WTC11 (cell line): ENCODE measurements at regions of chr1 and their contacts with region 1.

Region 1: DNA sequence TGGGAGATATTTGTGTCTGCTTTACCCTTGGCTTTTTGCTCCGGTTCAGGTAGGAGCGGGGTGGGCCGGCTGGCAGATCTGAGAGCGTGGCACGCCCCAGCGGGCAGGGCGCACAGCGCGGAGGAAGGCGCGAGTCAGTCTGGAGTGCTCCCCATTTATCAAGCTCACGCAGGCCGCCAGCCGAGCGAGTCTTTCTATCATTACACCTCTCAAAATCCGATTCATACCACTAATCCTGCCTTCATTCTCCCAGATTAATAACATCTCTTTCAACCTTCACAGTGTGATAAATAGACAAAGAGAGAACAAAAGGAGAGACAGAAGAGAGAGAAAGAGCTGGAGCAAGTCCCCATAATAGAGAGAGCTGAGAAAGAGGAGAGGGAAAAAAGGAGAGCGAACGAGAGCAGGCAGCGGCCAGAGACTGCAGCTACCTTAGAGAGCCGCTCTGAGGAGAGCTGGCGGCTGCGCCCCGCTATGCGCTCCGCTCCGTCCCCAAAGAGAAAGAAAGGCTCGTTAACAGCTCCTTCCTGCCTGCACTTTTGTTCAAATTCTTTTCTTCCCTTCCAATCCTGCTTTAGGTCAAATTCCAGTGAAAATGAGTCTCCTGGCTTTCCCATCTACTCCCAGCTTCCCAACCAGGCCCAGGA is 48.0 kb downstream of the DMAP1 start:
- DNase-seq: no peak
- ATAC-seq: peak; percentile 83
- H3K4me3 Mint-ChIP-seq: peak overlapping the region; percentile 21; the same call in 1 of the 2 replicates
- H3K27ac Mint-ChIP-seq: peak overlapping the region; percentile 81
- H3K4me1 Mint-ChIP-seq: peaks cover 55% of the 10 kb centered on the region
- H3K27me3 Mint-ChIP-seq: no peaks in the 10 kb centered on the region
- CTCF ChIP-seq: no peak

Region 2: GRCh38 chr1:44112486-44112885 is 148.8 kb before region 1 on chr1:
- CTCF ChIA-PET with region 1: no interaction called
- POLR2A ChIA-PET with region 1: no interaction called
- DNase-seq: no peak
- ATAC-seq: no peak
- H3K4me3 Mint-ChIP-seq: no peak overlapping the region
- H3K27ac Mint-ChIP-seq: no peak overlapping the region
- H3K4me1 Mint-ChIP-seq: no peaks in the 10 kb centered on the region; the same call in 1 of the 2 replicates
- H3K27me3 Mint-ChIP-seq: no peaks in the 10 kb centered on the region
- CTCF ChIP-seq: no peak

Region 3: DNA sequence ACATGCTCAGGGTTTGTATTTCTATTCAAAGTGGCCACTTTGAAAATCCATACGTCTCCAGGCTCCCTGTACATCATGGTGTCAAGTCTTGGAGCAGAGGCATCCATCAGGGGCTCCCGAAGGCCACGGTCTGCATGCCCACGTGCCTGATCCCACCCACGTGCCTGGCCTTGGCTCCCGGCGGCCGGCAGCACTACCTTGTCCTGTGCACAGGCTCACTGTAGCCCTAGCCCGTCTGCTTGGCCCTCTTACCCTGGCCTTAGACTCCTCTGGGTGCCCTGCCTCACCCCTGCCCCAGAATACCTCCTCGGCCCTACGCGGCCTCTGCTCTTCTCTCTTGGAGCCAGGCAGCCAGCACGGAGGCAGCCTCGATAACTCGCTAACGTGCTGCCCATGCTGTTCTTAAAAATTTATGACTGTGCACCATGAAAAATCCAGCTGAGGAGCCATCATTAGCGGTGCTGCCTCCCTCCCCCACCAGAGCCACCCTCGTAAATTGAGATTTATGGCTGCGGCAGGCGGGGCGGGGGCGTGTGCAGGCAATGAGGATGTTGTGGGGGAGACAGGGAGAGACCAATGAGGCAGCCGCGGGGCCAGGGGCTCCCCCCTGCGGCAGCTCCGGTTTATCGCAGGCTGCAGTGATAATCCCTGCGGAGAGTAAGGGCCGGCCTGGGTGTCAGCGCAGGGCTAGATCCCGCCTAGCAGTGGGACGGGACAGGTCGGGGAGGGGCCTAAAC is 23.4 kb before region 1 on chr1:
- CTCF ChIA-PET with region 1: interaction called, 12 read pairs
- POLR2A ChIA-PET with region 1: no interaction called
- DNase-seq: peak; percentile 89
- ATAC-seq: peak; percentile 98
- H3K4me3 Mint-ChIP-seq: peak overlapping the region; percentile 44
- H3K27ac Mint-ChIP-seq: peak overlapping the region; percentile 46
- H3K4me1 Mint-ChIP-seq: peaks cover 36% of the 10 kb centered on the region
- H3K27me3 Mint-ChIP-seq: no peaks in the 10 kb centered on the region
- CTCF ChIP-seq: peak; percentile 39; the same call in 1 of the 2 replicates

Region 4: DNA sequence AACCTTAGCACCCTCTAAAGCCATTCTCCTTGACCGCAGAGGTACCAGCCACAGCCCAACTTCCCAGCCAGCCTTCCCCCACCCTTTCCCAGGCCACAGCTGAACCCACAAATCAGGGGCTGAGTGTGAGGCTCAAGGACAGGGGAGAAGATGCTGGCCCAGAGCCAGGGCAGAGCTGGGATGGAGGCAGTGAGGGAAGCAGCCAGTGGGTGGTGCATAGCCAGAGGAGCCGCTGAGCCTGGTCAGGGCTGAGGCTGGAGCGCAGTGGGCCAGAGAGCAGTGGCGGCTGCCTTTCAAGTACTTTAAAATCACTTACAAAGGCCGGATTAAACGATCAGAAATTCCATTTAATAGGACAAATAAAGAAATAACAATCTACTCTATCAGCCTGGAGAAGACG is 11.8 kb before region 1 on chr1:
- CTCF ChIA-PET with region 1: interaction called, 10 read pairs
- POLR2A ChIA-PET with region 1: no interaction called
- DNase-seq: peak; percentile 40
- ATAC-seq: peak; percentile 87
- H3K4me3 Mint-ChIP-seq: no peak overlapping the region
- H3K27ac Mint-ChIP-seq: no peak overlapping the region; the same call in 1 of the 2 replicates
- H3K4me1 Mint-ChIP-seq: peaks cover 16% of the 10 kb centered on the region
- H3K27me3 Mint-ChIP-seq: no peaks in the 10 kb centered on the region
- CTCF ChIP-seq: no peak

Region 5: DNA sequence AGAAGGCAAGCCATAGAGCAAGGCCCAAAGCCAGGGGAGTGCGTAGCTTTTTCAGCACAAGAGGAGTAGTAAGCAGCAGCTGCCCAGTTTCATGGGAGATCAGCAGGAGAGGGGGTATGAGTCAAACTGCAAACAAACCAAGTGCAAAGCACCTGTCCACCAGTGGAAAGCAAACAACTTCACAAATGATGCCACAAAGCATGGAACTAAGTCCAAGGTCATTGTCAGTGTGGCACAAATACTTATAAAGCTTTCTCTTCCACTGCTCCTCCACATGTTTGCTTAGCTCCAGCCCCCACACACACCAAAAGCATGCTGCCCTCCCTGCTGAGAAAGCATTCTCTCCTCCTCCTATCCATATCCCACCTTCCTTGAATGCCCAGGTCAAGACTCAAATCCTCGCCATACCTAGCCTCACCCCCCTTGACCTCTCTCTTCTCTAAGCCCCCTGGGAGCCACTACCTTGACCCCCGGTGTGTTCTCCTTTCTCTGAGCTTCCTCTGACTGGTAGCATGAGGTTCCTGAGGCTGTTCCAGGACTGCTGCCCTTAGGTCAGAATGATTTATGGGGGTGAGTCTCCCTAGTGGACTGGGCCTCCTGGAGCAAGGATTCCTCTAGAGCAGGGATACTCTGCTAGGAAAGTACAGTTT is 22.4 kb after region 1 on chr1:
- CTCF ChIA-PET with region 1: no interaction called
- POLR2A ChIA-PET with region 1: no interaction called
- DNase-seq: no peak
- ATAC-seq: no peak
- H3K4me3 Mint-ChIP-seq: no peak overlapping the region
- H3K27ac Mint-ChIP-seq: no peak overlapping the region
- H3K4me1 Mint-ChIP-seq: no peaks in the 10 kb centered on the region
- H3K27me3 Mint-ChIP-seq: no peaks in the 10 kb centered on the region
- CTCF ChIP-seq: no peak

Region 6: GRCh38 chr1:44332505-44332904 is 71.2 kb after region 1 on chr1:
- CTCF ChIA-PET with region 1: no interaction called
- POLR2A ChIA-PET with region 1: no interaction called
- DNase-seq: no peak
- ATAC-seq: no peak
- H3K4me3 Mint-ChIP-seq: no peak overlapping the region
- H3K27ac Mint-ChIP-seq: 0 out of 2 replicates have a peak overlapping the region, but pooled peaks have one; percentile 48
- H3K4me1 Mint-ChIP-seq: peaks cover 28% of the 10 kb centered on the region
- H3K27me3 Mint-ChIP-seq: no peaks in the 10 kb centered on the region
- CTCF ChIP-seq: no peak

Region 7: DNA sequence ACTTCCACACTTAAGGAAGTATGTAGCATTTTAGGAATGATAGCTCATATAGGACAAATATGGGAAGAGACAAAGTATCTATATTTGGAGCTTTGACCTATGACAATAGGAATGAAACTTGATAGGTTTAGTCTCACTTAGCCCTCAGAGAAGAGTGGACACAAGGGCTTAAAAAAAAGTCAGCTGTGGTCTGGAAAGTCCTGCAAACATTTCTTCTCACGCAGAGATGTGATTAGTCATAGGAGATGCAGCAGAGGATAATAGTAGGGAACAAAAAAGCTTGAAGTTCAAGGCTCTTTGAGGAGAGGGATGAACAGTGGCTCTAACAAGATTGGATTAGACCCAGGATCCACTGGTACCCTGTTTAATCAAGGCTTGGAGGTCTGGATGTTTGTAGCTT is 129.0 kb after region 1 on chr1:
- CTCF ChIA-PET with region 1: no interaction called
- POLR2A ChIA-PET with region 1: no interaction called
- DNase-seq: no peak
- ATAC-seq: no peak
- H3K4me3 Mint-ChIP-seq: no peak overlapping the region
- H3K27ac Mint-ChIP-seq: no peak overlapping the region
- H3K4me1 Mint-ChIP-seq: peaks cover 3% of the 10 kb centered on the region; the same call in 1 of the 2 replicates
- H3K27me3 Mint-ChIP-seq: no peaks in the 10 kb centered on the region; the same call in 1 of the 2 replicates
- CTCF ChIP-seq: no peak